OCI-LY7 (cell line): ENCODE measurements at regions of chr19 and their contacts with region 1.

Region 1: DNA sequence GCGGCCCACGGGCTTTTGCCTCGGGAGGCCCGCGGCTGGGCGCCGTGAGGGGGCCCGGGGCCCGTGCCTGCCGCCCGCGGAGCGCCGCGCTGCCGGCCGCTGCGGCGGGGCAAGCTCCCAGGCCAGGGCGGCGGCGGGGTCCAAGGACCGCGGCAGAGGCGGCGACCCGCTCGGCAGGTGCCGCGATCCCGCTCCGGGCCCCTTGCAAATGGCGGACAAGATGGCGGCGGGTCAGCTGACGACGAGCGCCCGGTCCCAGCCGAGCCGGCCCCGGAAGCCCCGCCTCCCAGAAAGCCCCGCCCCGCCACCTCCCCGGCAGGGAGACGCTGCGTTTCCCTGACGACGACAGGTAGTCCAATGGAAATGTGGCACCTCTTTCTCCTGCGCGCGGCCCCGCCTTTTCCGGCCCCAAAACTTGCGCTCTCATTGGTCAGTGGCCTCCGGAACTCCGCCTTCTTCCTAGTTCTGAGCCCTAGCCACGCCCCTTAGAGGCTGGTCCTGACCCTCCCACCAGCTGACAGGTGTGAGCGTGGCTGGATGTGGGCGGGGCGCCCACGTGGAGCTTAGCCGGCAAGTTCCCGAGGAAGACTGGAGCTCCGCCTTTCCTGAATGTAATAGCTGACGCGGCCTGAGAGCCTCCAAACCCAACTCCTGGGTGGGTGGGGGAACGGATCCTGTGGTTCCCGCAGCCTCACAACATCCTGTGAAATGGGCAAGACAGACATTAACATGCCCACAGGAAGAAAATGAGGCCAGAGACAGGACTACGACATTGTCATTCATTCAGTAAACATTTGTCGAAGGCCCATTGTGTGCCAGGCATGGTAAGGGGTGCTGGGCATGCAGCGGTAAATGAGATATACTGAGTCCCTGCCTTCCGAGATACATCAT is at the start of gene AP3D1:
- DNase-seq: peak; percentile 100
- H3K4me3 ChIP-seq: peak within 1 kb of the TSS; percentile 90
- H3K27ac ChIP-seq: peak within 1 kb of the TSS; percentile 1
- H3K4me1 ChIP-seq: peaks cover 27% of the 10 kb centered on the region
- CTCF ChIP-seq: no peak
- total RNA-seq, gene AP3D1: 56.6 and 80.0 TPM in 2 replicates

Region 2: DNA sequence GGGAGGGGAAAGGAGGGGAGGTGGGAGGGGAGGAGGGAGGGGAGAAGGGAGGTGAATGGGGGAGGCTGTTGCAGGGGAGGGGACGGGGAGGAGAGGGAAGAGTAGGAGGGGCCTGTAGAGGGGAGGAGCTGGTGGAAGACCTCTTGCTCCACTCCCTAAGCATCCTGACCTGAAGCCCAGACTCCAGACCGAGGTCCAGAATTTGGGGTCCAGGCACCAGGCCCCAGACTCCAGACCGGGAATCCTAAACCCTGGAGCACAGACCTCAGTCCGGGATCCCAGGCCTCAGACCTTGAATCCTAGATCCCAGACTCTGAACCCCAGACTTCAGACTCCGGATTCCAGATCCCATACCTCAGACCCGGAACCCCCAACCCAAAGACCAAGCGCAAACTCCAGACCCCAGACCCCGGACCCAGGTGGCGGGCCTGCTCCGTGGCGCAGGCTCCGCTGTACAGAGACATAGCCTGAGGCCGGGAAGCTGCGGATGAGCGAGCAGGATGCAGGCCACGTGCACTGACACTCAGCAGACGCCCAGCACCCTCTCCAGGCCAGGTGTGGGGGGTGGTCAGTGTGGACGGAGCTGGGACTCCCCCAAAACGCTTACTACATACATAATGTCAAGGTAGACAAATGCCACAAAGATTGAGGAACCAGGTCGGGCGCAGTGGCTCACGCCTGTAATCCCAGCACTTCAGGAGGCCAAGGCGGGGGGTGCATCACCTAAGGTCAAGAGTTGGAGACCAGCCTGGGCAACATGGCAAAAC is 135.4 kb before region 1 on chr19:
- CTCF ChIA-PET with region 1: no interaction called
- POLR2A ChIA-PET with region 1: no interaction called
- intact Hi-C with region 1: loop called (anchors 5 kb)
- DNase-seq: peak; percentile 82
- H3K4me3 ChIP-seq: peak overlapping the region; percentile 70
- H3K27ac ChIP-seq: peak overlapping the region; percentile 51
- H3K4me1 ChIP-seq: peaks cover 20% of the 10 kb centered on the region
- CTCF ChIP-seq: no peak

Region 3: DNA sequence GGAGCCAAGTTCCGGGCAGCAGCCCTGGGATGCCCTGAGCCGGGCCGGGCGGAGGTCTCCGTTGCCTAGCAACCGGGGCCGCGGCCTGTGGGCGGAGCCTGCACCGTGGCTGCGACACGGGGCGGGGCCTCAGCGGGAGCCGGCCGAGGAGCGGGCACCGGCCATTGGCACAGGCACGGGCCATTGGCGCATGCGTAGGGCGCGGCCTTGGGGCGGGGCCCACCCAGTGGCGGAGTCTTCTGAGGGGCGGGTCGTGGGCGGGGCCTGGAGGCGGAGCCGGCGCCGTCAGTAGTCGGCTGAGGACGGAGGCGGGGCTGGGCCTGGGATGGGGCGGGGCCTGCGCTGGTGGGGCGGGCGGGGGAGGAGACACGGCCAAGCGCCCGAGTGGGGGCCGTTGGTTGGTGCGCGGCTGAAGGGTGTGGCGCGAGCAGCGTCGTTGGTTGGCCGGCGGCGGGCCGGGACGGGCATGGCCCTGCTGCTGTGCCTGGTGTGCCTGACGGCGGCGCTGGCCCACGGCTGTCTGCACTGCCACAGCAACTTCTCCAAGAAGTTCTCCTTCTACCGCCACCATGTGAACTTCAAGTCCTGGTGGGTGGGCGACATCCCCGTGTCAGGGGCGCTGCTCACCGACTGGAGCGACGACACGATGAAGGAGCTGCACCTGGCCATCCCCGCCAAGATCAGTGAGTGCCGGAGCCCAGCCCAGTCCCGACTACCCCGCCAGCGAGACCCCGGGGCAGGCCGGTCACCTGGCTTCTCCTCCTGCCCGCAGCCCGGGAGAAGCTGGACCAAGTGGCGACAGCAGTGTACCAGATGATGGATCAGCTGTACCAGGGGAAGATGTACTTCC is 54.9 kb before region 1 on chr19 and contains the start of gene IZUMO4:
- CTCF ChIA-PET with region 1: no interaction called
- POLR2A ChIA-PET with region 1: interaction called, 3 read pairs
- intact Hi-C with region 1: loop called (anchors 2 kb)
- DNase-seq: peak; percentile 97
- H3K4me3 ChIP-seq: peak within 1 kb of the TSS; percentile 85
- H3K27ac ChIP-seq: peak within 1 kb of the TSS; percentile 94
- H3K4me1 ChIP-seq: peaks cover 33% of the 10 kb centered on the region
- CTCF ChIP-seq: peak; percentile 72
- total RNA-seq, gene IZUMO4: 11.2 and 12.9 TPM in 2 replicates

Region 4: GRCh38 chr19:2236314-2237050 is 84.9 kb after region 1 on chr19 and contains the starts of genes PLEKHJ1 and SF3A2:
- CTCF ChIA-PET with region 1: interaction called, 3 read pairs
- POLR2A ChIA-PET with region 1: no interaction called
- intact Hi-C with region 1: loop called (anchors 2 kb)
- DNase-seq: peak; percentile 99
- H3K4me3 ChIP-seq: peak within 1 kb of the TSS; percentile 96
- H3K27ac ChIP-seq: peak within 1 kb of the TSS; percentile 75
- H3K4me1 ChIP-seq: peaks cover 68% of the 10 kb centered on the region
- CTCF ChIP-seq: peak; percentile 97
- total RNA-seq, gene PLEKHJ1: 205 and 221 TPM in 2 replicates
- total RNA-seq, gene SF3A2: 104 and 124 TPM in 2 replicates

Region 5: DNA sequence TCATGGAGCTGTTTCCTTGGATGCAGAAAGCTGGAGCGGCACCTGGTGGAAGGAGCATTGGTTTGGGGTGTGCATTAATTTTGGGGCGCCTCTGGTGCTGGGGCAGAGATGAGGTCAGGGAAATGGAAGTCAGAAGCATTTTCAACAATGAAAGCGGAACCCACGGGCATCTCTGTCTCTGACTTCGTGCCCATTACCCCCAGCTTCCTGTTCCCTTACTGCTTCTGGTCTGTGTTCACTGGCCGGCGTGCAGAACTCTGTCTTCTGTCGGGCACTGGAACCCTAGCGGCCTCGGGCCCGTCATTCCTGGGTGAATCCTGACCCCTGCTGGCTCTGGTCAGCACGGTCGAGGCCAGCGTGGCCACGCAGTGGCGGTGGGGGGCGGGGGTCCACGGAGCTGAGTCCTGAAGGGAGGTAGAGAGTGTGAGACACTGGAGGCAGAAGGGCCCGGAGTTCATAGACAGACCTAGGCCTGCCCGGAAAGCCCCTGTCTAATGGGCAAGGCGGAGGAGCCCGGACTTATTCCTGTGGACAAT is 164.3 kb after region 1 on chr19:
- CTCF ChIA-PET with region 1: no interaction called
- POLR2A ChIA-PET with region 1: no interaction called
- intact Hi-C with region 1: loop called (anchors 5 kb)
- DNase-seq: peak; percentile 37
- H3K4me3 ChIP-seq: no peak overlapping the region
- H3K27ac ChIP-seq: no peak overlapping the region
- H3K4me1 ChIP-seq: peaks cover 23% of the 10 kb centered on the region
- CTCF ChIP-seq: peak; percentile 37; the same call in 1 of the 2 replicates

Region 6: DNA sequence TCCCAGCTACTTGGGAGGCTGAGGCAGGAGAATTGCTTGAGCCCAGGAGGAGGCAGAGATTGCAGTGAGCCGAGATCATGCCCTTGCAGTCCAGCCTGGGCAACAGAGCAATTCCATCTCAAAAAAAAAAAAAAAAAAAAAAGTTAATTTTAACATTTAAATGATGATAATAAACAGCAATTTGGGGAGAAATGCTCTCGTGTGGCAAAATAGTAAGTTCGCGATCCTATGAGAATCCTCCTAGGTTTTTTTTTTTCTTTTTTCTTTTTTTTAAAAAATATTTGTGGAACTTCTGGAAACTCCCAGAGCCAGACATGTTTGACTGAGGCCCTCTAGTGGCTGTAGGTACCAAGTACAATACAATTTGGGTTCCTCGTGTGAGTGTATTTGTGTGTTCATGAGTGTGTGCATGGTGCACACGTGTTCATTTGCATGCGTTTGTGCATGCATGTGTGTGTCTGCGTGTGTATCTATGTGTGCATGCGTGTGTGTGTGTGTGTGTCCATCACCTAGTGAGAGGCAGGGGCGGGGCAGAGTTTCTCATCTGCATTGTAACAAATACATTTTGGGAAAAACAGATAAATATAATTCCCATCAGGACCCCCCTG is 239.6 kb after region 1 on chr19:
- CTCF ChIA-PET with region 1: no interaction called
- POLR2A ChIA-PET with region 1: no interaction called
- intact Hi-C with region 1: loop called (anchors 1 kb)
- DNase-seq: peak; percentile 86
- H3K4me3 ChIP-seq: no peak overlapping the region
- H3K27ac ChIP-seq: no peak overlapping the region
- H3K4me1 ChIP-seq: peaks cover 22% of the 10 kb centered on the region
- CTCF ChIP-seq: peak; percentile 92